Caco-2 (cell line): ENCODE measurements at regions of chr18 and their contacts with region 1.

Region 1: DNA sequence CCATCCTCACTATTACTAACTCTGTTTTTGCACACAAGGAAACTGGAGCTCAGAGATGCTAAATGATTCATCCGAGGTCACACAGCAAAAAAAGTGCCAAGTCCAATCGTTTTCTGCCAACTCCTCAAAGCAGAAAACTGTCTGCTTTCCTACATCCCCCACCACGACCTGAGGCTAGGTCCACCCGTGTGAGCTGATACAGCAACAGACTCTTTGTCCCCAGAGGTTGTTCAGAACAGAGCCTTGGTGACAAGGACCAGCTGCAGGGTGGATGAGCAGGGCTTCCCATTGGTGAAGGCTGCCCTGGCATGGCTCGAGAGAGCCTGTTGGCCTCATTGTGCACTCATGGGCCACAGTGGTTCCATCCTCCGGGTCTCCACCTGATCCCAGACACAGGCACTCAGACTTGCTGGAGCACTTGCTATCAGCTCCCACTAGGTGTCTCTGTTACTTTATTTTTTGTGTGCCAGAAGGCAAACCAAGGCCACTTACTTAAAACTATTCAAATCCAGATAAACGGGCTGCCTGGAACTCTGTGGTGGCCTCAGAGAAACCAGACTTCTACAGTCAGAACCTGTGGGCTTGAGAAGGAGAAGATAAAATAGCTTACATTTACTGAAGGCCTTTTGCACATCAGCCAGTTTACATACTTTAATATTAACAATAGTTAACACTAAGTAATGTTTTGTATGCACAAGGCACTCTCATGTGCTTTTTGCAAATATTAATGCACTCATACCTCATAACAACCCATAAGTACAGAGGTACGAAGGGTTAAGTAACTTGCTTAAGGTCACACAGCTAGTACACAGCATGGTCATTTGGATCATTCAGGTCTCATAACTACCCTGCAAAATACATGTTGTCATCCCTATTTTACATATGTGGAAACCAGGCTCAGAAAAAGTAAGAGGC is 62.9 kb upstream of the CTIF start:
- DNase-seq: peak; percentile 60 to 63
- H3K4me3 ChIP-seq: no peak overlapping the region
- H3K4me3 Mint-ChIP-seq: no peak overlapping the region
- H3K27ac Mint-ChIP-seq: no peak overlapping the region
- H3K4me1 ChIP-seq: peaks cover 4% of the 10 kb centered on the region; the same call in 1 of the 2 replicates
- H3K4me1 Mint-ChIP-seq: no peaks in the 10 kb centered on the region
- H3K27me3 ChIP-seq: no peaks in the 10 kb centered on the region
- H3K27me3 Mint-ChIP-seq: peaks cover 2% of the 10 kb centered on the region
- CTCF ChIP-seq: peak; percentile 55 to 58

Region 2: DNA sequence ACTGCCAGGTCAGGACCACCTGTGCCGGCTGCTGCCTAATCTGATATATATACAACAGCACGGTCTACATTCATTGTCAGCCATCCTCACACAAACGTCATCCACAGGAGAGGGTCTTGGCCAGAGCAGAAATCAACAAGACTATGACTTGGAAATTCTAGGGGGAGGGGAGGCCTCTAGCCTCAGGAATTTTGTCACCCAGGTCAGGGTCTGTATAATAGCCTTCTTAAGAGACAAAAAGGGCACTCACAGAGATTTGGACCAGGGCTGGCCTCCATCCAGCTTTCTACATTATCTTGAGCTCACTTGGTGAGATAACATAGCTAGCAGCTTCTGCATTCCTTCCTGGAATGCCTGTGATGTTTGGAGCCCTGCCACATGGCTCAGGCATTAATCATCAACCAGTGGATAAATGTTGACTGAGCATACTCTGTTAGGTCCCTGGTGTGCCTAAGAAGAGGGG is 12.5 kb after region 1 on chr18:
- CTCF ChIA-PET with region 1: no interaction called
- POLR2A ChIA-PET with region 1: no interaction called
- intact Hi-C with region 1: loop called (anchors 1 kb)
- DNase-seq: peak; percentile 69 to 83
- H3K4me3 ChIP-seq: no peak overlapping the region
- H3K4me3 Mint-ChIP-seq: peak overlapping the region; percentile 54
- H3K27ac Mint-ChIP-seq: peak overlapping the region; percentile 92
- H3K4me1 ChIP-seq: peaks cover 31% of the 10 kb centered on the region
- H3K4me1 Mint-ChIP-seq: peaks cover 26% of the 10 kb centered on the region
- H3K27me3 ChIP-seq: no peaks in the 10 kb centered on the region
- H3K27me3 Mint-ChIP-seq: no peaks in the 10 kb centered on the region
- CTCF ChIP-seq: no peak

Region 3: GRCh38 chr18:48538531-48539405 is 62.9 kb after region 1 on chr18 and contains the start of gene CTIF:
- CTCF ChIA-PET with region 1: no interaction called
- POLR2A ChIA-PET with region 1: no interaction called
- intact Hi-C with region 1: loop called (anchors 2 kb)
- DNase-seq: peak; percentile 90 to 94
- H3K4me3 ChIP-seq: peak within 1 kb of the TSS; percentile 65
- H3K4me3 Mint-ChIP-seq: peak within 1 kb of the TSS; percentile 77
- H3K27ac Mint-ChIP-seq: peak within 1 kb of the TSS; percentile 48
- H3K4me1 ChIP-seq: peaks cover 22% of the 10 kb centered on the region
- H3K4me1 Mint-ChIP-seq: no peaks in the 10 kb centered on the region
- H3K27me3 ChIP-seq: no peaks in the 10 kb centered on the region
- H3K27me3 Mint-ChIP-seq: no peaks in the 10 kb centered on the region
- CTCF ChIP-seq: no peak
- total RNA-seq, gene CTIF: 19.9 and 21.4 TPM in 2 replicates

Region 4: DNA sequence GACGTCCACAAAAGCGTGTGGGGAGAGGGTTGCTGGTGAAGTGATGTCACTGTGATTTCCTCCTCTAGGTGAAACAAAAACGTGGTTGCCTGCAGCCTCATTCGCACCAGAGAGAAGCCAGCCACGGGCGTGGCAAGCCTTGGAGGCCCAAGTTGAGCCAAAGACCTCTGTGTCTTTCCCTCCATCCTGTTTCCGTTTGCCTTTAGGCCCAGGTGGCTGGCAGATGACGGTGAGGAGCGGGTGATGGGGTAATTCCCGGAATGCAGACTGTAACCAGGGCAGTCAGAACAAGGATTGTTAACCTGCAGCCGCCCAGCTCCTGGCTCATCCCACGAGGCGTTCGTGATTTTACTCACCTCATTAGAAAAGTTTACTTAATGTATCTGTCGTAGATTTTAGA is 77.3 kb after region 1 on chr18:
- CTCF ChIA-PET with region 1: no interaction called
- POLR2A ChIA-PET with region 1: no interaction called
- intact Hi-C with region 1: no loop called
- DNase-seq: no peak
- H3K4me3 ChIP-seq: no peak overlapping the region
- H3K4me3 Mint-ChIP-seq: no peak overlapping the region
- H3K27ac Mint-ChIP-seq: no peak overlapping the region
- H3K4me1 ChIP-seq: peaks cover 4% of the 10 kb centered on the region
- H3K4me1 Mint-ChIP-seq: peaks cover 7% of the 10 kb centered on the region
- H3K27me3 ChIP-seq: no peaks in the 10 kb centered on the region
- H3K27me3 Mint-ChIP-seq: no peaks in the 10 kb centered on the region
- CTCF ChIP-seq: no peak

Region 5: DNA sequence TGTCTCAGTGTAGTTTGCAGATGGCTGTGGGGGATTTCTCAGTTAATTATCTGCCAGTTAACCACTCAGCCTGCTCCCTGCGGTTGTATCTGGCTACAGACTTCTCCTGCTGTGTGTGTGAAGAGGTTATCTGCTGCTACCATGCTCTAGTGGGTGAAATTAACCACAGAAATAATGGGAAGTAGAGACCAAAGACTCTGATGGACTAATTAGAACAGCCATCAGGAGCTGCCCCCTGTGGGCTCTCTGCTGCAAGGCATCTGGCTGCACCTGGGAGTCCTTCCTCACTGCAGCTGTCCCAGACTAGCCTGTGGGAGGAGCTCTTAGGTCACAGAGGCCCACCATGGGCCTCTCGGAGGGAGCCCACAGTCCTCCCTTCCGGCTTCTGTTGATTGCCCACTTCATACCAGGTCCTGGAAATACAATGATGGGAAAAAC is 129.5 kb after region 1 on chr18:
- CTCF ChIA-PET with region 1: interaction called, 6 read pairs
- POLR2A ChIA-PET with region 1: no interaction called
- intact Hi-C with region 1: loop called (anchors 1 kb)
- DNase-seq: peak; percentile 28 to 37
- H3K4me3 ChIP-seq: no peak overlapping the region
- H3K4me3 Mint-ChIP-seq: no peak overlapping the region
- H3K27ac Mint-ChIP-seq: no peak overlapping the region
- H3K4me1 ChIP-seq: no peaks in the 10 kb centered on the region
- H3K4me1 Mint-ChIP-seq: no peaks in the 10 kb centered on the region
- H3K27me3 ChIP-seq: no peaks in the 10 kb centered on the region
- H3K27me3 Mint-ChIP-seq: no peaks in the 10 kb centered on the region
- CTCF ChIP-seq: peak in 1 of 2 experiments; percentile 48

Region 6: GRCh38 chr18:48667276-48668254 is 191.7 kb after region 1 on chr18:
- CTCF ChIA-PET with region 1: interaction called, 3 read pairs
- POLR2A ChIA-PET with region 1: no interaction called
- intact Hi-C with region 1: loop called (anchors 1 kb)
- DNase-seq: peak; percentile 49 to 52
- H3K4me3 ChIP-seq: no peak overlapping the region
- H3K4me3 Mint-ChIP-seq: peak overlapping the region; percentile 30
- H3K27ac Mint-ChIP-seq: peak overlapping the region; percentile 13
- H3K4me1 ChIP-seq: peaks cover 18% of the 10 kb centered on the region; the same call in 1 of the 2 replicates
- H3K4me1 Mint-ChIP-seq: peaks cover 14% of the 10 kb centered on the region
- H3K27me3 ChIP-seq: no peaks in the 10 kb centered on the region
- H3K27me3 Mint-ChIP-seq: no peaks in the 10 kb centered on the region
- CTCF ChIP-seq: peak in 1 of 2 experiments; percentile 54